HEK293T (cell line): ENCODE measurements at regions of chr3 and their contacts with region 1.

Region 1: DNA sequence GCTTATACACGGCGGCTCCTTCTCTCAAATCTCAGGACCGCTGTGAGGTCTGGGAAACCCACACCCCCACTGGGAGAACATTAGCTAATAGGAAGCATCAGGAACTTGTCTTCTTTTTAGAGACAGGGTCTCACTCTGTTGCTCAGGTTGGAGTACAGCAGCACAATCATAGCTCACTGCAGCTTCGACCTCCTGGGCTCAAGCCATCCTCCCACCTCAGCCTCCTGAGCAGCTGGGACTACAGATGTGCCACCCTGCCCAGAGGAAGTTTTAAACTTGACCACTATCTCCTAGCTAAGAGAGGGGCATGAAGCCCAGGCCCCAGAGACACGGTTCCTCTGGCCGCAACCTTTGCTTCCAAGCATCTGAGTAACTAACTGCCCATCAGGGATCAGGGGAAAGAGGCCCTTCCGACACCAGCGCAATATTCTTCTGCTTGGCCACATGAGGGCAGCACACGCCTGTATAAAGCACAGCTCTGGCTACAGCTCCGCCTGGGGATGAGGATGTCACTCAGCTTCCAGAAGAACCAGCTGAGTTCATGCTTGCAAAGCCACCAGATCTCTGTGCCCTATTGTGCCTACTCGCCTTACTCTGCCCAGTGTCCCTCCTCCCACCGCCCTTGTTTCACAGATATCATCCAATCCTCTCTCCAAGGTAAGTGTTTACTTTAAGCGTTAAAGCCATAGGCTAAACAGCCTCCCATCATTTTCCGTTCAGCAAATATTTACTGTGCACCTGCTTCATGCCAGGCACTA is 57.5 kb upstream of the SLC6A11 start:
- DNase-seq: peak; percentile 85

Region 2: DNA sequence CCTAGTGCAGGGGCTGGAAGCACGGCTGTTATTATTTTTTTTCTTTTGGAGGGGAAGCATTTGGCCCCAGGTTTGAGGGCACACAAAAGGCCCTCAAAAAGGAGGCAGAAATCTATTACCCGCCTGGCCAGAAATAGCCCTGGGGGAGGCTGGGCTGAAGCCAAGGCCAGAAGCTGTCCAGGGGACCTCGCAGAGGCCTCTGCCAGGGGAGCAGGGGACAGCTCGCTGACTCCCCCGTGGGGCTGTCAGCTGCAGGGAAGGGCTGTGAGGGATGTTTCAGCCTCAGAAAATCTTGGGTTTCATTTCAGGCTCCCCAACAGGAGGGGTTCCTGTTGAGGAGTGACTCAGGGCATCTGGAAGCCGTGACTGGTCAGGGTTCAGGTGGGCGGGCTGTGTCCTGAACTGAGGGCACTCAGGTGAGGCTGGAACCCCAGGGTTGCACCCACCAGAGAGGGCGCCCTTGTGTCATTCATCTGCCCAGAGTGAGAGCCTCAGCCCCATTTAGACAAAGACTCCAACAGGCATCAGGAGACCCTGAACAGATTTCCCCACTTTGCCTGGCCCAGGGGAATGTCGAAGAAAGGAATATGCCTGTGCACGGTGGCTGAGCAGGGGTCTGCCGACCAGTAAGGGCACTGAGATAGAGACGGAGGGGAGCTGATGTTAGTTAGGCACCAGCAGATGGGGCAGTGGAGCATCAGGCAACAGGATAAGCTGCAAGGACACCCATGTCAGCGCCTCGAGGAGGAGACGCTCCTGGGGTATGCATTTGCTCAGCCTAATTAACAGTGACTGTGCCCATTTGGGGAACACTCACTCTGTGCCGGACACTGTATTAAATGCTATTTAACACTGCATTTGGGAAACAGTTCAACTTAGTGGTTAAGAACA is 14.0 kb after region 1 on chr3:
- CTCF ChIA-PET with region 1: interaction called, 11 read pairs
- POLR2A ChIA-PET with region 1: no interaction called
- DNase-seq: peak; percentile 38

Region 3: DNA sequence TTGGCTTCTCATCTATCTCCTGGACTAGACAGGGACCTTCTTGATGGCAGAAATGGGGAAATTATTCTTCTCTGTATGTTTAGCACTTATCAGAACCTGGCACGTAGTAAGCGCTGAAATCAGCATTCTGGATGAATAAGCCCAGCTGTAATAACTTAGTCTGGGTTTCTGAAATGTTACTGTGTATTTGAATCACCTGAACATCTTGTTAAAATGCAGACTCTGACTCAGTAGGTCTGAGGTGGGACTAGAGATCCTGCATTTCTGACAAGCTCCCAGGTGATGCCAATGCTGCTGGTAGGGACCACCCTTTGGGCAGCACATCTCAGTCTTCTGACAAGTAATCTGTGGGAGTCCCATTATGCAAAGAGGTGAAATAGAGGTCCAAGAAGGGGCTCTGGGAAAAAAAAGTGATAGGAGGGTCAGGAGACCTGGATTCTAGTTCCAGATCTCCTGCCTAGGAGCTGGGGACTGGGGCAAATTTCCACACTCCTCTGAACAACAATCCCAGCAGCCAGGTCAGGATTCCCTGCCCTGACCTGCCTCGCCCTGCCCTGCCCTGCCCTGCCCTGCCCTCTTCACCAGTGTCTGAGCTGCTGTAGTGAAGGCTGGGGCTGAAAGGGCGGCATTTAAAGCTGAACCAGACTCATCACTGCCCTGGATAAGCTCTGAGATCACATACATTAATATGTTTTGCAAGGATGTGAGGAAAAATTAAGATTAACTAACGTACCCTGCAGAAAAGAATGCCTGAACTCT is 40.3 kb after region 1 on chr3:
- CTCF ChIA-PET with region 1: no interaction called
- POLR2A ChIA-PET with region 1: no interaction called
- DNase-seq: no peak

Region 4: GRCh38 chr3:10968401-10968800 is 209.9 kb after region 1 on chr3:
- CTCF ChIA-PET with region 1: no interaction called
- POLR2A ChIA-PET with region 1: no interaction called
- DNase-seq: no peak

Region 5: DNA sequence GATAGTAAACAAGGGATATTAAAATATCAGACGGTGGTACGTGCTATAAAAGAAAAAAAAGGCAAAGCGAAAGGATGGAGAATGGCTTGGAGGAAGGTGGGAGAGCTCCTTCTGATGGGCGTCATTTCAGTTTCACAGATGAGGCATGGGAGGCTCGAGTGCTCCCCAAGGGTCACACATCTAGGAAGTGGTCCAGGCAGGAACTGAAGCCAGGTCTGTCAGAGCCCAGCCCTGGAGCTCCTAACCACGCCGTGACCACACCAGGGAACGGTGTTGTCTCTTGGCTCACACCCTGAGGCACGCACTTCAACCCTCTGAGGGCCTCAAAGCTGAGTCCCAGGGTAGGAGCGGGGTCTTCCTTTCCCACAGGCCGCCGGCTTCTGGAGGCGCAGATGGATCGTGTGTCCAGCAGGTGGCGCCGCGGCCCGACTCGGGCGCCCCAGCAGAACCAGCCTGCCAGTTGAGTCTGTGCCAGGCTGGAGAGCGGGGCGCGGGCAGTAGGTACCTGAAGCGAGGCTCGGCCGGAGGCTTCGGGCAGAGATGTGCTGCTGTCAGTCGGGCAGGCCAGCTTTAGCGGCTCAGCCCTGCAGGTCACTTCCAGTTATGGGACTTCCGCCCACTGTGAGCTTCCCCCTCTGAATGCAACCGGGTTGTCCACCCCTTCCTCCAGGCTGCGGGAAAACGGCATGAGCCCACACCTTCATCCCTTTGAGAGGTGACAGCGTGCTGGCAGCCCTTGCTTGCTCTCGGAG is 302.2 kb after region 1 on chr3:
- CTCF ChIA-PET with region 1: interaction called, 11 read pairs
- POLR2A ChIA-PET with region 1: no interaction called
- DNase-seq: peak; percentile 81